ENCODE measurements at regions of chr1 and their contacts with region 1.

Region 1: DNA sequence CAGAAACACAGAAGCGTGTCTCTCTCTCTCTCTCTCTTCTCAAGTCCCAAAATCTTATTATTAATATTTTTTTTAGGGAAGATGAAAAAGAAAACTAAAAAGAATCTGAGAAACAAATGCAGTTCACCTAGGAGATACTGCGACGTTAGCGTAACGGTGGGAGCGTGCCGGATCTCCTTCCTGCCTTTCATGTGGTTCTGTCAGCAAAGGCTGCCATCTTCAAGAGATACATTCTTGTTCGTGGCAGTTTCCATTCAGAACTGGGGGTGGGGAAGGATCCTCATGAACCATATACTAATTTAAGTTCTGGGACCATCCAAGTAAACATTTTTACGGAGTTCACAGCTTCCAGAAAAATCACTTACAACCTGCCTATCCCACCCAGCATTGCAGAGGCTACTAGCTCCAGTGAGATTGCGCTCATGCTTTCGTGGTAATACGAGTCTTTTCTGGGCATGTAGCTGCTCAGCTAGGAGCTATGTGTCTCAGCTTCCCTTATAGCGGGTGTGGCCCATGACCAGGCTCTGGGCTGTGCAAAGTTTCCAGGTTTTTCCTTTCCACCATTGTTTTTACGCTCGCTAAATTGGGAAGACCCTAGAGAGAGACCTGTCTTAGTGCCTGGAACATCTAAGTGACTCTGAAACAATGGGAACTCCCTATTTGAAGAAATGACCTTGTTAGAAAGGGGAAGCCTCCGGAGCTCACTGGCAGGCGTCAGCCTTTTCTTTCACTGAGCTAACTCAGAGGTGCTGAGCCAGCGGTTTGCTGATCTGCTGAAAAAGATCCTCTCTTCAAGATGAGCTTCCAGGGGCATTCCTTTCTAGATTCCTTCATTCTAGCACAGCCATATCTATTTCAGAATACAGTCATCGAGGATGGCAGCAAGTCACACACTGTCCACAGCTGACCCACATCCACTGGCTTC is 17.3 kb downstream of the SLAMF1 start:
- DNase-seq: peak; percentile 70
- ATAC-seq: peak; percentile 67
- H3K4me3 Mint-ChIP-seq: peak overlapping the region; percentile 75
- H3K27ac Mint-ChIP-seq: peak overlapping the region; percentile 97
- H3K4me1 Mint-ChIP-seq: peaks cover 86% of the 10 kb centered on the region
- H3K27me3 Mint-ChIP-seq: no peaks in the 10 kb centered on the region

Region 2: DNA sequence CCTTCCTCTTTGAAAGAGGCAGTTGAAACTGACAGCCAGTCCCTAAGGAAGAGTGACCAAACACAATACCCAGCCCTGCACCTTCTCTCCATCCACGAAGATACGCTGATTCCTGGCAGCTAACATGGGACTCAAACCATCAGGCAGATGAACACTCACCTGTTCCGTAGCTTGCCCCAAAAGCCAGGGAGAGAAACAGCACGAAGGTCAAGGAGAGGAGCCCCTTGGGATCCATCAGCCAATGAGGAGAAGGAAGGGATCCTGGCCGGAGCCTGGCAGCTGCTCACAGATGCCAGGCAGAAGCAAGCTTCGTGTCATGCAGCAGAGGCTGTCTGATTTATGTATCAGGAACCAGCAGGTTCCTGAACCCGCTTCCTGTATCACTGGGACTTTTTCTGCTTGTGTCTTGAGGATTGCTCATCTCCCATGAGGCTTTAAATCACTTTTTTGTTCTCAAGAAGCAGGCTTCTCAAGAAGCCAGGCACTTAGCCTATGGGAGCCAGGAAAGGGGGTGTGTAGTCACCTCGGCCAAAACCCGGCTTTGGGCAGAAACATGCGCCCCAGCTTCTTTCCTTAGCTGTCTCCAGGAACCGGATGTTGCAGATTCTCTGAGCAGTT is 17.3 kb after region 1 on chr1 and contains the start of gene SLAMF1:
- POLR2A ChIA-PET with region 1: interaction called, 22 read pairs
- DNase-seq: no peak
- ATAC-seq: peak; percentile 58
- H3K4me3 Mint-ChIP-seq: peak within 1 kb of the TSS; percentile 96
- H3K27ac Mint-ChIP-seq: peak within 1 kb of the TSS; percentile 93
- H3K4me1 Mint-ChIP-seq: peaks cover 66% of the 10 kb centered on the region
- H3K27me3 Mint-ChIP-seq: no peaks in the 10 kb centered on the region
- total RNA-seq, gene SLAMF1: 41.3 to 42.6 TPM

Region 3: GRCh38 chr1:160664573-160665051 is 35.1 kb after region 1 on chr1:
- POLR2A ChIA-PET with region 1: interaction called, 12 read pairs
- DNase-seq: no peak
- ATAC-seq: peak; percentile 79
- H3K4me3 Mint-ChIP-seq: peak overlapping the region; percentile 74
- H3K27ac Mint-ChIP-seq: peak overlapping the region; percentile 85
- H3K4me1 Mint-ChIP-seq: peaks cover 61% of the 10 kb centered on the region
- H3K27me3 Mint-ChIP-seq: peaks cover 1% of the 10 kb centered on the region